H1 (cell line): ENCODE measurements at regions of chr9 and their contacts with region 1.

Region 1: DNA sequence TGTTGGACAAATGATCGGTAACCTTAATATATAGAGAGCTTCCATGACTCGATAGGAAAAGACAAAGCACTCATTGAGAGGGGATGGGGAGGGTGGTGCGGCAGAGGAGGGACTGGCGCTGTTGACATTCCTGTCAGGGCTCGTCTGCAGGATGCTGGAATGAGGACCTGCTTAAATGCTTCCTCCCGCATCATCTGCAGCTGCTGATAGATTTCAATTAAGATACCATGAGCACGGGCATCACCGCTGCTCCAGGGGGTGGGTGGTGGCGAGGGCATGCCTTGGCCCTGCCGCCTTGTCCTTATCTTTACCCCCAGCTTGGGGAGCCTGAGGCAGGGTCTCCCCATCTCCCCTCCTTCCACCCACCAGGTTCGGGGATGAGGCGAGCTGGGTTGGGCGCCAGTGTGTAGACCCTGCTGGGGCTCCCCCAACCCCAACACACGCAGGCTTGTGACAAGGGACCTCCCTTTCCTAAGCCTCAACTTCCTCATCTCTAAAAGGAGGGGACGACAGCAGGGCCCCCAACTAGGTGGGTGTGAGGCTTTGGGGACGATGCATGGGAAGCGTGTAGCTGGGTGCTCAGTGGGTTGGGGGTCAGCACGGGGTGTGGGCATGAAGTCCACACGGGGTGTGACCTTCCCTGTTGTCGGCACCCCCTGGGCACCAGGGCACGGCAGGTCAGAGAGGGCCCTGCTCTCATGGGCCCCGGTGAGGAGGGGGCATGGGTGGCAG is 11.7 kb upstream of the QRFP start:
- DNase-seq: no peak
- H3K4me3 ChIP-seq: no peak overlapping the region
- H3K27ac ChIP-seq: no peak overlapping the region
- H3K4me1 ChIP-seq: peaks cover 0 to 2% (median 0%) of the 10 kb centered on the region in 4 experiments; a peak in 3 of 7 replicates
- H3K27me3 ChIP-seq: no peaks in the 10 kb centered on the region
- CTCF ChIP-seq: no peak
- EP300 ChIP-seq: no peak
- POLR2A ChIP-seq: no peak
- RAD21 ChIP-seq: no peak

Region 2: DNA sequence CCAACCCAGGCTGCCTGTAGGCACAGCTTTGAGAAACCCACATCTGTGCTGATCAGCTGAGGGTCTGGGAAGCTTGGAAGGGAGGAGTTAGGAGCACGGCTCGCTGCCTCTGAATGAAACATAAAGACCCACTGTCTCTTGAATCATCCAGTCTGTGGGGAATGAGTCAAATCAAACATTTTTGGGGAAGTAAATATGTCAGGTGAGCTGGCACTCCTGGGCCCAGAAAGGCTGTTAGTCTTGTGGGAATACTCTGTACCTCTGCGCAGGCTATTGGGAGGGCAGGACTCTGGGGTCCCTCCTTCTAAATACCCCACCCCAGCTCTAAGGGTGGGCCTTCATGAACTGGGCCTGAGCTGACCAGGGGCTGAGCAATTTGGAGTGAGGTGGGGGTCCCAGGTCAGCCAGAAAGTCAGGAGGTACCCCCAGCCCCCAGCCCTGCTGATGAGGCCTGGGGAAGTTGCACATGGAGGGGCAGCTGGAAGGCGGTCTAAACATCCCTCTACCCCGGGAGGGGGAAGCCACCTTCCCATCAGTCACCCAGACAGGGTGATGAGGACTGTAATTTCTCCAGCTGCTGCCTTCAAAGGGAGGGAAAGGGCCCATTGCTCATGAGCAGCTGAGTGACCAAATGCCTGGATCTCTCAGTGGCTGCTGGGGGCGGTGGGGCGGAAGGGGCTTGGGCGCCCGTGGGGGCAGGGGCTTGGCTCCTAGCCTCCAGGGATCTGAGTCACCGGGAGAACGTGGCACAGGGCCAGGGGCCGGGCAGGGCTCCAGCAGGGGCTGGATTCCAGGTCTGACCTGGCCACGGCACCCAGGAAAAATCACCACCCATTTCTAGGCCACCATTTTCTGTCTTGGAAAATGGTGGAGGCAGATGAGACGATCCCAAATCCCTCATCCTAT is 19.9 kb after region 1 on chr9:
- CTCF ChIA-PET with region 1: interaction called, 12 read pairs
- POLR2A ChIA-PET with region 1: interaction called, 9 read pairs
- DNase-seq: no peak
- H3K4me3 ChIP-seq: no peak overlapping the region
- H3K27ac ChIP-seq: no peak overlapping the region
- H3K4me1 ChIP-seq: peaks cover 0 to 18% (median 8%) of the 10 kb centered on the region in 4 experiments; a peak in 6 of 7 replicates
- H3K27me3 ChIP-seq: no peaks in the 10 kb centered on the region
- CTCF ChIP-seq: no peak
- EP300 ChIP-seq: no peak
- POLR2A ChIP-seq: no peak
- RAD21 ChIP-seq: no peak